ENCODE measurements at regions of chr5 and their contacts with region 1.

Region 1: DNA sequence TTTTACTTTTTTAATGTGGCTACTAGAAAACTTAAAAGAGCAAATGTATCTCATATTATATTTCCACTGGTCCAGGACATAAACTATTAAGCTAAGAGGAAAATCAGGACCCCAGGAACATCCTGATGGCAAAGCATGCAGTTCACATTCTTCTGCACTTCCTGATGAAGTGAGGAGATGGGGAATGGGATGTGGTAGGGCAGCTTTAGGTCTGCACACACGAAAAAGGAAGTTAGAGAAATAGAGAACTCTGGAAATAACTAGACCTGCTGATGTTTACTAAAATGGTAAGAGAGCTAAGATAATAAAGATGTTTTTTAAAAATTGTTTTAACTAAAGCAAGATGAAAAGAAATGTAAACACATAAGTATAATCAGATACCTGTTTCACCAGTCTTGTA is 39.7 kb upstream of the NIPBL start:
- DNase-seq: no peak
- H3K4me3 ChIP-seq: no peak overlapping the region
- H3K27ac ChIP-seq: no peak overlapping the region
- H3K4me1 ChIP-seq: no peaks in the 10 kb centered on the region
- H3K27me3 ChIP-seq: no peaks in the 10 kb centered on the region
- CTCF ChIP-seq: no peak

Region 2: DNA sequence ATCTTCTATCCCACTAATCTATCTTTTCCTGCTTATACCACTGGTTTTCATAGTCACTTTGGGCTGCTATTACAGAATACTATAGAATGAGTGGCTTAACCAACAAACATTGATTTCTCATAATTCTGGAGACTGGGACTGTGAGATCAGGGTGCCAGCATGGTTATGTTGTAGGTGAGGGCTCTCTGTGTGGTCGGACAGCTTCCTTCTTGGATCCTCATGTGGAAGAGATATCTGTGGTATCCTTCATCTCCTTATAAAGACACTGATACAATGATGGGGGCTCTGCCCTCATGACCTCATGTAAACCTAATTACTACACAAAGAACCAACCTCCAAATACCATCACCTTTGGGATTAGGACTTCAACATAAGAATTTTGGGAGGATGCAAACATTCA is 1592.7 kb before region 1 on chr5:
- CTCF ChIA-PET with region 1: no interaction called
- POLR2A ChIA-PET with region 1: interaction called, 35 read pairs
- intact Hi-C with region 1: no loop called
- DNase-seq: no peak
- H3K4me3 ChIP-seq: no peak overlapping the region
- H3K27ac ChIP-seq: no peak overlapping the region
- H3K4me1 ChIP-seq: no peaks in the 10 kb centered on the region
- H3K27me3 ChIP-seq: no peaks in the 10 kb centered on the region
- CTCF ChIP-seq: no peak

Region 3: GRCh38 chr5:36230151-36230793 is 606.6 kb before region 1 on chr5:
- CTCF ChIA-PET with region 1: interaction called, 11 read pairs
- POLR2A ChIA-PET with region 1: no interaction called
- intact Hi-C with region 1: no loop called
- DNase-seq: peak in 1 of 2 experiments; percentile 33
- H3K4me3 ChIP-seq: no peak overlapping the region
- H3K27ac ChIP-seq: no peak overlapping the region
- H3K4me1 ChIP-seq: peaks cover 19% of the 10 kb centered on the region
- H3K27me3 ChIP-seq: no peaks in the 10 kb centered on the region
- CTCF ChIP-seq: no peak

Region 4: GRCh38 chr5:36982146-36982545 is 145.3 kb after region 1 on chr5:
- CTCF ChIA-PET with region 1: no interaction called
- POLR2A ChIA-PET with region 1: no interaction called
- intact Hi-C with region 1: no loop called
- DNase-seq: peak in 1 of 2 experiments; percentile 41
- H3K4me3 ChIP-seq: no peak overlapping the region
- H3K27ac ChIP-seq: no peak overlapping the region
- H3K4me1 ChIP-seq: no peaks in the 10 kb centered on the region
- H3K27me3 ChIP-seq: no peaks in the 10 kb centered on the region
- CTCF ChIP-seq: no peak

Region 5: GRCh38 chr5:37054391-37054790 is 217.6 kb after region 1 on chr5:
- CTCF ChIA-PET with region 1: no interaction called
- POLR2A ChIA-PET with region 1: no interaction called
- intact Hi-C with region 1: no loop called
- DNase-seq: no peak
- H3K4me3 ChIP-seq: no peak overlapping the region
- H3K27ac ChIP-seq: no peak overlapping the region
- H3K4me1 ChIP-seq: no peaks in the 10 kb centered on the region
- H3K27me3 ChIP-seq: no peaks in the 10 kb centered on the region
- CTCF ChIP-seq: no peak